Activated CD4-positive, alpha-beta memory T cell treated with anti-CD3 and anti-CD28 coated beads for 36 hours (primary cell): ENCODE measurements at regions of chr6 and their contacts with region 1.

Region 1: GRCh38 chr6:159062564-159062945 is 17.8 kb upstream of the TAGAP start:
- DNase-seq: peak; percentile 76
- H3K4me3 Mint-ChIP-seq: peak overlapping the region; percentile 53
- H3K27ac Mint-ChIP-seq: peak overlapping the region; percentile 93
- H3K4me1 Mint-ChIP-seq: peaks cover 99% of the 10 kb centered on the region
- H3K27me3 Mint-ChIP-seq: no peaks in the 10 kb centered on the region

Region 2: GRCh38 chr6:158999666-159000403 is 62.7 kb before region 1 on chr6 and contains the start of gene RSPH3:
- CTCF ChIA-PET with region 1: no interaction called
- POLR2A ChIA-PET with region 1: no interaction called
- intact Hi-C with region 1: loop called (anchors 1 kb)
- DNase-seq: peak; percentile 97
- H3K4me3 Mint-ChIP-seq: peak within 1 kb of the TSS; percentile 97
- H3K27ac Mint-ChIP-seq: peak within 1 kb of the TSS; percentile 86
- H3K4me1 Mint-ChIP-seq: peaks cover 34% of the 10 kb centered on the region
- H3K27me3 Mint-ChIP-seq: no peaks in the 10 kb centered on the region
- total RNA-seq, gene RSPH3: 6.1 to 6.8 TPM

Region 3: DNA sequence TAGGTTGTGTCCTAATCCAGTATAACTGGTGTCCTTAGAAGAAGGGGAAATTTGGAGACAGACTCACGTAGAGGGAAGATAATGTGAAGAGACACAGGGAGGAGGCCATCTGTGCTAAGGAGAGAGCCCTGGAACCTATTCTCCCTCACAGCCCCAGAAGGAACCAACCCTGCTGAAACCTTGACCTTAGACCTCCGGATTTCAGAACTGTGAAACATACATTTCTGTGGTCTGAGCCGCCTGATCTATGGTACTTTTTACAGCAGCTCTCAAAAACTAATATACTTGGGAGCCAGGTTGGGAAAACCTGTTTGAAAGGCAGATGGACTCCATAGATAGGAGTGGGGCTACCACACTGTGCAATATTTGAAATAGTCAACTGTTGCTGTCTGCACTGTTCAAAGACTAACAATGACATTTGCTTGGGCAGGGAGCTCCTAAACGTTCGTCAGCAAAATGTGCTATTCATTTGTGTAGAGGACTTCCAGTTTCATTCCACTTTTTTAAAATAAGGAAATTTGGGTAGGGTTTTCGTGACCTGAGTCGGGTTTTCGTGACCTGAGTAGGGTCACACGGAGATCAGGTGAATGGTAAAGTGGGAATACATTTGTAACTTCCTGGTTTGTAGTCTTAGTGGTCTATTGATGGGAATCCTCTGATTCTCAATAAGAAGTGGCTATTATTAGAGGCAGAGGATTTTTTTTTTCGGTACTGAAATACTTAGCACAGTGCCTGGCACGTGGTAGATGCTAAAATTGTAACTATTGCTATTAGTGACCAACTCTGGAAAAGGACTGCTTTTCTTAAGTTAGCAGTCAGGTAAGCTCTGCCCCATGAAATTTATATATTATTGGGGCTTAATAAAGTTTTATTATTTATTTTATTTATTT is 29.1 kb before region 1 on chr6:
- CTCF ChIA-PET with region 1: no interaction called
- POLR2A ChIA-PET with region 1: no interaction called
- intact Hi-C with region 1: no loop called
- DNase-seq: no peak
- H3K4me3 Mint-ChIP-seq: no peak overlapping the region
- H3K27ac Mint-ChIP-seq: no peak overlapping the region
- H3K4me1 Mint-ChIP-seq: peaks cover 43% of the 10 kb centered on the region
- H3K27me3 Mint-ChIP-seq: no peaks in the 10 kb centered on the region

Region 4: DNA sequence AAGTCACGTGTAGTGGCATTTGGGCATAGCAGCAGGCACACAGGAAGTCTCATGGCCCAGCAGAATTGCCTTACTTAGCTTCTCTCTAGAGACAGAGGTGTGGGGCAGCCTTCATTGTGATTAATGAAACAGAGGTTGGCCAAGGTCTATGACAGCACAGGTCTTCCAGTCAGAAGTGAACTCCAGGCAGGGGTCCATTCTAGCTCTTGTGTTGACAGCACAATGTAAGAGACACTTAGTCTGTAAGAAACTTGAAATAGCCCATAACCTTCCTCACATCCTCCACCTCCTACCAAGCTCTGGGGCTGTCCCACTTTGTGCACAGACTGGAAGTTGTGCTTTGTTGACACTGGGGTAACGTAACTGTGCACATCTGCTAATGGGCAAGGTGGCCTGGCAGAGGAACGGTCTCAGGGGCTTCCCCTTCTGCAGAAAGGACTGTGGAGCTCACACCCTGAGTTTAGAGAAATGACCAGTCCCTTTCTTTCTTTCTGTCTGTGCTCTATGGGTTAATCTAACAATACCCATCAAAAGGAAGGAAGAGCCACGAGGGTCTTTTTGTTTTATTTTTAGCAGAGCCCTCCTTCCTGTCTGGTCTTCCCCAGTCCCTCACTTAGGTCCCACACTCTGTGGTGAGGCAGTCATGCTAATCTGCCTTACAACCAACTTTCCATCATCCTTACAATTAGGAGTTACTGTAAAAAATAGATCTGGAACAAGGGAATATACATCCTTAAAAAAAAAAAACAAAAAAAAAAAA is 17.8 kb after region 1 on chr6:
- CTCF ChIA-PET with region 1: interaction called, 4 read pairs
- POLR2A ChIA-PET with region 1: interaction called, 8 read pairs
- intact Hi-C with region 1: loop called (anchors 1 kb)
- DNase-seq: peak; percentile 54
- H3K4me3 Mint-ChIP-seq: no peak overlapping the region
- H3K27ac Mint-ChIP-seq: peak overlapping the region; percentile 23
- H3K4me1 Mint-ChIP-seq: peaks cover 48% of the 10 kb centered on the region
- H3K27me3 Mint-ChIP-seq: no peaks in the 10 kb centered on the region

Region 5: DNA sequence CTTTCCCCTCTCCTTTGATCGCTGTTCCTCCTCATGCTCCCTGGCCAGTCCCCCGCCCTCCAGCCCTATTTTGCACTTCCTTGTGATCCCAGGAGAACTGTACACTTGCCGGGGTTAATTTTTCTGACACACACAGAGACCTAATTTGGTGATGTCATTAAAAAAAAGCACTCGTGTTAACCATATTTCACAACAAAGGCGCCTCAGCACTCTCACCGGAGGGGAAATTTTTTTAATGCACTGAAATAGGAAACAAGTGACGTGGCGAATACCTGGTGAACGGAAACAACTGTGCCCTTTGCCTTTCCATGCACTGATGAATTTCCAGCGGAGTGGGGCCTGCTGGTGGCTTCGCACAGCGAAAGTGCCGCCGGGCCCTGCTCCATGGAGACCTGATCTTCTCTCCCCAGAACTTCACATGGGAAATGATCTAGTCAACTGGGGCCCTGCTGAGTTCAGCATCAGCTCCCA is 36.1 kb after region 1 on chr6:
- CTCF ChIA-PET with region 1: interaction called, 13 read pairs
- POLR2A ChIA-PET with region 1: interaction called, 5 read pairs
- intact Hi-C with region 1: loop called (anchors 1 kb)
- DNase-seq: peak; percentile 83
- H3K4me3 Mint-ChIP-seq: peak overlapping the region; percentile 63
- H3K27ac Mint-ChIP-seq: peak overlapping the region; percentile 87
- H3K4me1 Mint-ChIP-seq: peaks cover 79% of the 10 kb centered on the region
- H3K27me3 Mint-ChIP-seq: no peaks in the 10 kb centered on the region

Region 6: DNA sequence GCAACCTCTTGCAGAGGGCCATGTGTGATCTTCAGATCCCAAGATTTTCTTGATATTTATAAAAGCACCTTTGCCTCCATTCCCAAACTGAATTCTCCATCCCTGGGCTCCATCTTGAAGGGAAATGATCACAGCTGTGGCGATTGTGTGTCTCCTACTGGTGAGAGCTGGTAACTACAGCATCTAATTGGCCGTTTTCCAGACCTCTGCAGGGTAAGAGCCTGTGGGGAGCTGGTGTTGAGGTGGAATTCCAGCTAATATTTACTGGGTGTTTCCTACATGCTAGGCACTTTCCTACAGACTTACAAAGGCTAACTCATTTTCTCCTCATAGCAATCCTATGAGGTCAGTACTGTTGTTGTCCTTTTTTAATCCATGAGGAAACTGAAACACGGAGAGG is 47.5 kb after region 1 on chr6:
- CTCF ChIA-PET with region 1: interaction called, 13 read pairs
- POLR2A ChIA-PET with region 1: interaction called, 7 read pairs
- intact Hi-C with region 1: no loop called
- DNase-seq: peak; percentile 62
- H3K4me3 Mint-ChIP-seq: no peak overlapping the region
- H3K27ac Mint-ChIP-seq: peak overlapping the region; percentile 19
- H3K4me1 Mint-ChIP-seq: peaks cover 52% of the 10 kb centered on the region
- H3K27me3 Mint-ChIP-seq: no peaks in the 10 kb centered on the region

Region 7: DNA sequence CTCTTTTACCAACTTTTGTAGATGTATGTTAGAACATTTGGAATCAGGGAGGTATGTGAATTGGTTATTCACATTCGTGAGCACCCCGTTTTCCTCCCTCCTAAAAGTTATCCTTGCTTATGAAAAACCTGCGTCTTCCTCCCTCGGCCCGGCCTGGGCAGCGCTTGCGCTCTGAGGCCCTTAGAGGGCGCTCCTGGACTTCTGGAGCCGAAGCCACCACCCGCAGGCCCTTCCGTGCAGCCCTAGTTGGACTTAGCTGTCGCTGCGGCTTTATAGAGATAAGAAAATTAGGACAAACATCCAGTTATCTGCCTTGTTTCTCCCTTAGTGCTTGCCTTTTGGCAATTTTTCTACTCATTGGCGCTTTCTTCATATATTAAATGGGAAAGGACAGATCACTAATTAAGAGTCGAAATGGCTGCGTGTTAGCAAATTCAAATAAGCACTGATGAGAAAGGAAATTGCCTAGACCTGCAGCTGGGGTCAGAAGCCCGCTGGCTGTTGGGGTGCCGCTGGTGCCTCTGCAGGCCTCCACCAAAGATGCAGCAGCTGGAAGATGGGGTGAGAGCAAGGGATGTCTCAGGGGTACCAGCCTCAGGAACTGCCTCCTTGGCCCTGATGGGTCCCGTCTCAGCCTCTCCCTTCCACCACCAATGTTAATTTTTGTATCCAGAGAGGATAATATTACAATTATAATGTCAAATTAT is 111.9 kb after region 1 on chr6:
- CTCF ChIA-PET with region 1: no interaction called
- POLR2A ChIA-PET with region 1: no interaction called
- intact Hi-C with region 1: no loop called
- DNase-seq: peak; percentile 82
- H3K4me3 Mint-ChIP-seq: no peak overlapping the region
- H3K27ac Mint-ChIP-seq: no peak overlapping the region
- H3K4me1 Mint-ChIP-seq: peaks cover 10% of the 10 kb centered on the region
- H3K27me3 Mint-ChIP-seq: peaks cover 46% of the 10 kb centered on the region